GM13977 (cell line): ENCODE measurements at regions of chr6 and their contacts with region 1.

Region 1: DNA sequence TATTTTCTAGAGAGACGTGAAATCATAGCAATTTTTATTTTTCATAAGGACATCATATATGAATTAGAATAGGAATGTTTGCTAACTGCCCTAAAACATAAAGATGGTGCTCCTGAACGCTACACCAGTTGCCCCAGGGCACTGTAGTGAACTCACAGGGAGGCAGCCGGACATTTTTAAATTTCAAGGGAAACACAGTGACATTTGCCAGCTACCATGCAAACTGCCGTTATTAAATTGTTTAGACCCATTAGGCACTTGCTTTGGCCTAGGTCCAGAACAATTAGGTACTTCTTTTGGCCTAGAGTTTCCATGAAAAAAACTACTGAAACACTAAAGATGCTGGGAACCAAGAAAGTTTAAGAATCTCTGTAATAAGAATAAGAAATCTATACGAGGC is 24.9 kb upstream of the CFAP206 start:
- DNase-seq: no peak
- CTCF ChIP-seq: no peak

Region 2: DNA sequence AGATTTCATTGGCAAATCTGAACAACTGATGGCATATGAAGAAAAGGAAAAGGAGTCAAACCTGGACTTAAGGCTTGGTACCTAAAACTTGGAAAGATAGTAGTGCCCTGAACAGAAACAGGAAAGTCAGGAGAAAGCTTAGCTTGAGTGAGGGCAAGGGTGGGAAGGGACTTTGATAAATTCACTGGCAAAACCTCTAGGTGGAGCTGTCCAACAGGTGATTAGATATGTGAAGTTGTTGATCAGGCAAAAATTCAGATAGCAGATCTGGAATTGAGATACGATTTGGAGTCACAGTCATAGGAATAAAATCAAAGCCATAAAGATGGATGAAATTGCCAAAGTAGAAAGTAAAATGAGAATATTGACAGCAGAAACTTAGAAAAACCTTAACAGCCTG is 243.6 kb before region 1 on chr6:
- in situ Hi-C with region 1: loop called (anchors 10 kb)
- DNase-seq: peak; percentile 53
- CTCF ChIP-seq: peak; percentile 73

Region 3: GRCh38 chr6:87164004-87164403 is 218.9 kb before region 1 on chr6:
- in situ Hi-C with region 1: no loop called
- DNase-seq: no peak
- CTCF ChIP-seq: no peak

Region 4: DNA sequence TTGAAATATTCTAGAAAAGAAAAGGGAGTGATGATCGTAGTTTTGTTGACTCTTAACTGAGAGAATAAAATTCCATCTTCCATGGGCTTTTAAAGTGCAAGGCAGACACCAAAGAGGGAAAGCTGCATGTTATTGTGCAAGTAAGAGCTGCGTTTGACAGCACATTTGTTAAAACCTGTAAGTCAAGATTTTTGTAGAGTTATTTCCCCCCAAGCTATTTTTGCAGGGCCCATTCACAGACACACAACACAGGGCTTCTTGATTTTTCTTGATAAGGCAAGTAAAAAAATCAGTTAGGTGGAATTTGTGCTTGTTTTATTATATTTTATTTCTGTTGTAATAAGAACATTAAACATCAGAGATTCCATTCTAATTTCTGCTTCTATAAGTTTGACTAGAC is 38.7 kb after region 1 on chr6:
- in situ Hi-C with region 1: no loop called
- DNase-seq: no peak
- CTCF ChIP-seq: no peak